Activated CD4-positive, alpha-beta T cell treated with anti-CD3 and anti-CD28 coated beads, Interleukin-2, amount 10 ng/mL, durations not matched to agents 7 days and 5 days (primary cell): ENCODE measurements at regions of chr1 and their contacts with region 1.

Region 1: DNA sequence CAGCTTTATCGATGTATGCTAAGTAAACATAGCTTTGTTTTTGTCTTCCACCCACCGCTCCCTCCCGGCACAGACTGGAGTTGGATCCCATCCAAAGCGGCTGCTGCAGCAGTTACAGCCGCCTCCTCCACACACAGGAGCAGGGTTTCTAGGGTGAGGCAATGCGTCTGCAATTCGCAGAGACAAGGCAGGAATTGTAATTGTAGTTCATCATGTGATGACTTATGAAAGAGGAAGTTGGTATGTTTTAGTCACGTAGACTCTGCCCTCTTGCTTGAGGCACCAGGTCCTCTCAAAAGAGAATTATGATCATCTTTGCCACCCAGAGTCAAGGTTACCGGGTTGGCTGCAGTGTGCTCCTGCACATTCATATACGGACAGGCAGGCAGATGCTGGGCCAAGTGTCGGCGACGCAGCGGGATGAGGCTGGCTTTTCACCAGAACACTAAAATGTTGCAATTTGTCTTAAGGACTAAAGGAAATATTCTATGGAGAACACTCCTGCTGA is 2.7 kb upstream of the IRF2BP2 start:
- DNase-seq: peak; percentile 74
- H3K4me3 Mint-ChIP-seq: peak overlapping the region; percentile 74
- H3K27ac Mint-ChIP-seq: peak overlapping the region; percentile 99
- H3K4me1 Mint-ChIP-seq: peaks cover 38% of the 10 kb centered on the region
- H3K27me3 Mint-ChIP-seq: no peaks in the 10 kb centered on the region

Region 2: DNA sequence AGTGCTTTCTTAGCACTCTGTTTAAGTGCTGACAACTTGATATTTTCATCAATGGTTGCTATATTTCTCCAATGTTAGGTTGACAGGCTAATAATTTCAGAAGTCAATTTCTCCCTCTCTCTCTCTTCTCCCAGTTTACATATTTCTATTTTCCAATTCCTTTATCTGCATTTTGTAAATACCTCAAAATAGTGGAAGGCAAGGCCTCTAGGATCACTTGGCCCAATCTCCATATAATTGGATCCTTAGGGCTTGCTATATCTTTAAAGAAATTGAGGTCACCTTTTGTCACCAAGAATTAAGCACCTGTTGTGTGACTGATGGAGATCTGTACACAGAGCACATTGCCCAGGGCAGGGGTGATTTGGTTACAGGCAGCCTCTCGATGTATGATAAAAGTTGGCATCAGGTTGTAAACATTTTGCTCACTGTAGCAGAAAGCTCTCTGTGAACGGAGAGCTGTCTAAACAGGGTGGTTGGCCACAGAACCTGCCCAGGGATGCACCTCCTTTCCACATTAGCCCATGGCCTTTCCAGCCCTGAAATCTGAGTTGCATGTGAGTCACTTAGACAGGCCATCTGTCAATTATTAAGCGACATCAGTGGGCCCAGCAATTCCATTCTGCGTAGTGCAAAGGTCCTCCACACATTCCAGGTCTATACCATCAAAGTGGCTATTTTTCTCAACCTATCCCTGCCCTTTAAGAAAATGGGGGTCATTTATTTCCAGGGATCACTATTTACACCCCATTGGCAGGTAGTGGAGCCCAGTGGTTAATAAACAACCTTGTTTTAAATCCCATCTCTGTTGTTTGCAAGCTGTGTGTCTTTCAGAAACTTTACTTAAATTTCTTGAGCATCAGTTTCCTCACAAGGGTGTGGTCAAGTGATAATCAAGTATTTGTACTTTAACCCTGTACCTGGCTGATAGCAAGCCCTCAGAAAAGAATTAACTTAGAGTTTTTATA is 26.4 kb after region 1 on chr1:
- CTCF ChIA-PET with region 1: no interaction called
- POLR2A ChIA-PET with region 1: no interaction called
- DNase-seq: no peak
- H3K4me3 Mint-ChIP-seq: no peak overlapping the region
- H3K27ac Mint-ChIP-seq: no peak overlapping the region
- H3K4me1 Mint-ChIP-seq: peaks cover 2% of the 10 kb centered on the region
- H3K27me3 Mint-ChIP-seq: no peaks in the 10 kb centered on the region

Region 3: GRCh38 chr1:234725177-234726132 is 112.8 kb after region 1 on chr1:
- CTCF ChIA-PET with region 1: interaction called, 5 read pairs
- POLR2A ChIA-PET with region 1: interaction called, 15 read pairs
- DNase-seq: peak; percentile 68
- H3K4me3 Mint-ChIP-seq: peak overlapping the region; percentile 60
- H3K27ac Mint-ChIP-seq: peak overlapping the region; percentile 95
- H3K4me1 Mint-ChIP-seq: peaks cover 93% of the 10 kb centered on the region
- H3K27me3 Mint-ChIP-seq: no peaks in the 10 kb centered on the region